B cell (primary cell): ENCODE measurements at regions of chr15 and their contacts with region 1.

Region 1: DNA sequence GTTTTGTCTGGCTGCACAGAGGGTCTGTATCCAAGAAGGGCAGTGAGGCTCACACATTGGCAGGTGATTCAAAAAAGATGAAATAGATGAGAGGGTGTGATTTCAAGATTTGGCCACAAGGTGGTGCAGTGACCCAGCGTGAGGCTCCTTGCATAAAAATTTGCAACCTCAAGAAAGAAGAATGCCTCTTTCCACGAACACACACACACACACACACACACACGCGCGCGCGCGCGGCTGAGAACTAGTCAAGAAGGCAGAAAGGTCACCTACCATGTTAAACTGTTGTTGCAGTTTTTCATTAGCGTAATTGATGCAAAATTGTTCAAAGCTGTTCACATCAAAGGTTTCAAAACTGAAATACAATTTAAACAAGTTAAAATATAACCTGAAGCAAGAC is 39.2 kb downstream of the MYO5C start:
- DNase-seq: peak; percentile 89
- ATAC-seq: peak; percentile 87
- H3K4me3 ChIP-seq: no peak overlapping the region
- H3K4me3 Mint-ChIP-seq: peak overlapping the region; percentile 50
- H3K27ac ChIP-seq: no peak overlapping the region
- H3K27ac Mint-ChIP-seq: peak overlapping the region; percentile 85
- H3K4me1 ChIP-seq: peaks cover 18 to 33% of the 10 kb centered on the region in 2 donors
- H3K4me1 Mint-ChIP-seq: peaks cover 43% of the 10 kb centered on the region
- H3K27me3 ChIP-seq: no peaks in the 10 kb centered on the region
- H3K27me3 Mint-ChIP-seq: no peaks in the 10 kb centered on the region
- CTCF ChIP-seq: peak; percentile 79

Region 2: DNA sequence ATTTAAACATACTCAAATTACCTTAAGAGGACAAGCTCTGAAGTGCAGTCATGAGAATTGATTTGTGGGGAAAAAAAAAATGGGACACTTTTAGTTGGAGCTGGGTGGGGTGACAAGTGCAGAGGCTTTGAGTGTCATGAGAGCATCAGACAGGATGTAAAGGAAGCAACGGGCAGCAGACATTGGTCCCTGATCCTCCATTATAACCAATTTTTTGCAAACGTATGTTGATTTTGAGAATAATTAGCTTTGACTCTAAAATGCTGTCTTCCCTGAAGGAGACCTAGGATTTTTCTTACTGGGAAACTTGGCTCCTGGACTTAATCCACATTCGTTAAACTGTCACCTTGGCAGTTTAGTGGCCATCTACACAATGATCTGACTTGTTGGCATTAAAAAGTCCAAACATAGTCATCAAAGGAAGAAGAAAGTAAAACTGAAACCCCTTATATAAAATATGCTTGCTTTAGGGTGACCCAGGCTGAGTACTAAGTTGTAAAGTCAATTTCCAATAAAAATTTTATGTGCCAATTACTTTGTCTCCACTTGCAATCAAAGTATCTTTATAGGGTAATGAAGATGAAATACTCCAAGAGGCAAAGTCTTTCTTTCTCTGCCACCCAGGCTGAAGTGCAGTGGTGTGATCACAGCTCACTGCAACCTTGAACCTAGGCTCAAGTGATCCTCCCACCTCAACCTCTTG is 189.4 kb before region 1 on chr15:
- CTCF ChIA-PET with region 1: no interaction called
- POLR2A ChIA-PET with region 1: no interaction called
- intact Hi-C with region 1: no loop called
- DNase-seq: no peak
- ATAC-seq: no peak
- H3K4me3 ChIP-seq: no peak overlapping the region
- H3K4me3 Mint-ChIP-seq: no peak overlapping the region
- H3K27ac ChIP-seq: no peak overlapping the region
- H3K27ac Mint-ChIP-seq: no peak overlapping the region
- H3K4me1 ChIP-seq: peaks cover 0 to 6% of the 10 kb centered on the region in 2 donors
- H3K4me1 Mint-ChIP-seq: peaks cover 10% of the 10 kb centered on the region
- H3K27me3 ChIP-seq: no peaks in the 10 kb centered on the region
- H3K27me3 Mint-ChIP-seq: no peaks in the 10 kb centered on the region
- CTCF ChIP-seq: no peak

Region 3: GRCh38 chr15:52154896-52155865 is 101.2 kb before region 1 on chr15:
- CTCF ChIA-PET with region 1: no interaction called
- POLR2A ChIA-PET with region 1: no interaction called
- intact Hi-C with region 1: no loop called
- DNase-seq: no peak
- ATAC-seq: no peak
- H3K4me3 ChIP-seq: no peak overlapping the region
- H3K4me3 Mint-ChIP-seq: no peak overlapping the region
- H3K27ac ChIP-seq: no peak overlapping the region
- H3K27ac Mint-ChIP-seq: no peak overlapping the region
- H3K4me1 ChIP-seq: peaks cover 0 to 11% of the 10 kb centered on the region in 2 donors
- H3K4me1 Mint-ChIP-seq: peaks cover 20% of the 10 kb centered on the region
- H3K27me3 ChIP-seq: no peaks in the 10 kb centered on the region
- H3K27me3 Mint-ChIP-seq: no peaks in the 10 kb centered on the region
- CTCF ChIP-seq: no peak

Region 4: GRCh38 chr15:52179278-52180195 is 76.8 kb before region 1 on chr15:
- CTCF ChIA-PET with region 1: interaction called, 8 read pairs
- POLR2A ChIA-PET with region 1: interaction called, 12 read pairs
- intact Hi-C with region 1: no loop called
- DNase-seq: peak; percentile 95
- ATAC-seq: peak; percentile 78
- H3K4me3 ChIP-seq: peak overlapping the region; percentile 67 to 97 (median 87)
- H3K4me3 Mint-ChIP-seq: peak overlapping the region; percentile 93
- H3K27ac ChIP-seq: peak overlapping the region; percentile 97
- H3K27ac Mint-ChIP-seq: peak overlapping the region; percentile 99
- H3K4me1 ChIP-seq: peaks cover 33 to 48% of the 10 kb centered on the region in 2 donors
- H3K4me1 Mint-ChIP-seq: peaks cover 59% of the 10 kb centered on the region
- H3K27me3 ChIP-seq: no peaks in the 10 kb centered on the region
- H3K27me3 Mint-ChIP-seq: no peaks in the 10 kb centered on the region
- CTCF ChIP-seq: no peak

Region 5: DNA sequence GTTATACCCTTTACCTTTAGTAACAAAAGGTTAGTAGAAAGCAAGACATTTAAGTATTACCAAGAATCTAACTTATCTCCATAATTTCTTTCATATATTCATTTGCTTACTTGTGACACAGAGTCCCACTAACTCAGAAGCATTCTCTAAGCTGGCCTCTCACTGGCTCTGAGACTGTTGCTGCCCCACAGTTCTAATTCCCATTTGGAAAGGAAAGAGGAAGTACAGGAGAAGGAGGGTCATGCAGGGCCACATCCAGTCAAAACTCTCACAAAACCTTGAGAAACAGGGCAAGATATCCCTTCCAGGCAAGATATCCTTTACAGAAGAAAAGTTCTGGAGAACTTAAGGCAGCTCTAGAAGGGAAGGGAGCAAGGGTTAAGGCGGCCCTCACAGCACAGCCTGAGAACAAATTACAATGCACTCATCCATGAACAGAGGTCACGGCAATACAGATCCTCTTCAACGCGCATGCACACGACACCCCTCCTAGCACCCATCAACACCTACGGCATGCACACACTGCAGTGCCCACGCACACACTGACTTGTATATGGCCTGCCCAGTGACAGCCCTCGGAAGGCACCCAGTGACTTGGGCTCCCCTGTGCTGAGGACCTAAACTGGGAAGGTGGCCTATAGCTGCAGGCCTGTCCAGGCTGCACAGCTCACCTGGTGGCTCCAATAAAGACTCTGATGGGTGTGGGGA is 52.2 kb after region 1 on chr15:
- CTCF ChIA-PET with region 1: interaction called, 12 read pairs
- POLR2A ChIA-PET with region 1: no interaction called
- intact Hi-C with region 1: loop called (anchors 1 kb)
- DNase-seq: peak; percentile 35
- ATAC-seq: peak; percentile 76
- H3K4me3 ChIP-seq: peak overlapping the region in 1 of 5 experiments; percentile 34
- H3K4me3 Mint-ChIP-seq: peak overlapping the region; percentile 59
- H3K27ac ChIP-seq: peak overlapping the region; percentile 29 to 52
- H3K27ac Mint-ChIP-seq: peak overlapping the region; percentile 43
- H3K4me1 ChIP-seq: peaks cover 19 to 20% of the 10 kb centered on the region in 2 donors
- H3K4me1 Mint-ChIP-seq: peaks cover 26% of the 10 kb centered on the region
- H3K27me3 ChIP-seq: no peaks in the 10 kb centered on the region
- H3K27me3 Mint-ChIP-seq: no peaks in the 10 kb centered on the region
- CTCF ChIP-seq: no peak

Region 6: GRCh38 chr15:52337198-52337853 is 81.0 kb after region 1 on chr15:
- CTCF ChIA-PET with region 1: interaction called, 44 read pairs
- POLR2A ChIA-PET with region 1: interaction called, 3 read pairs
- intact Hi-C with region 1: loop called (anchors 1 kb)
- DNase-seq: no peak
- ATAC-seq: no peak
- H3K4me3 ChIP-seq: no peak overlapping the region
- H3K4me3 Mint-ChIP-seq: no peak overlapping the region
- H3K27ac ChIP-seq: no peak overlapping the region
- H3K27ac Mint-ChIP-seq: no peak overlapping the region
- H3K4me1 ChIP-seq: no peaks in the 10 kb centered on the region
- H3K4me1 Mint-ChIP-seq: no peaks in the 10 kb centered on the region
- H3K27me3 ChIP-seq: no peaks in the 10 kb centered on the region
- H3K27me3 Mint-ChIP-seq: no peaks in the 10 kb centered on the region
- CTCF ChIP-seq: no peak

Region 7: DNA sequence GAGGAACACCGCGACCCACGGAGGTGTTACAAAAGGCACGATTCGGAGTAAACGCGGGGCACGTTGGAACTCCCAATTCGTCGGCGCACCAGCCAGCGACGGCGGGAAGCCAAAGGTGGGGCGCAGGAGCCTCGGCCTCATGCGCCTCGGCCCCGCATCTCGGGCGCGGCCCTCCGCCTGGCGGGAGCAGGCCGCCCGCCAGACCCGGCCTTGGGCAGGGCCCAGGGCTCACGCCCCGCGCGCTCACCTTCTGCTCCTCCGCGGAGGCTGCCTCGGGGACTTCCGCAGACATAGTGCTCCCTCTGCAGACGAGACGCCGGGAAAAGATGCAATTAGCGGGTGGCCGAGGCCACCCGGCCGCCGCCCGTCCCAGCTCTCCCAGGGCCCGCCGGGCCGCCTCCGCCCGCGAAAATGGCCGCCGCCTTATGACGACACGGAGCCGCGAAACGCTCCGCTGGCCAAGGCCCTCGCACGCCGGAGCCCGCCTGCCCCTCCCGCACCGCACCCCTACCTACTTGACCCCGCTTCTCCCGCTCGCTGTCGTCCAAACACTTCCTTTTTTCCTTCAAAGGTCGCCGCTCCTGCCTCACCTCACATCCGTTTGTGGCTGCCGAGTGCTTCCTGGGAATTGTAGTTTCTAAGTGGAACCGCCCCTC is 312.4 kb after region 1 on chr15 and contains the start of gene ARPP19:
- CTCF ChIA-PET with region 1: interaction called, 4 read pairs
- POLR2A ChIA-PET with region 1: no interaction called
- intact Hi-C with region 1: loop called (anchors 5 kb)
- DNase-seq: peak; percentile 93
- ATAC-seq: peak; percentile 84
- H3K4me3 ChIP-seq: peak within 1 kb of the TSS; percentile 61 to 83 (median 75)
- H3K4me3 Mint-ChIP-seq: peak within 1 kb of the TSS; percentile 98
- H3K27ac ChIP-seq: peak within 1 kb of the TSS; percentile 93 to 99
- H3K27ac Mint-ChIP-seq: peak within 1 kb of the TSS; percentile 98
- H3K4me1 ChIP-seq: peaks cover 33 to 35% of the 10 kb centered on the region in 2 donors
- H3K4me1 Mint-ChIP-seq: peaks cover 42% of the 10 kb centered on the region
- H3K27me3 ChIP-seq: no peaks in the 10 kb centered on the region
- H3K27me3 Mint-ChIP-seq: no peaks in the 10 kb centered on the region
- CTCF ChIP-seq: no peak
- total RNA-seq, gene ARPP19: 147 and 152 TPM in 2 replicates

Region 8: DNA sequence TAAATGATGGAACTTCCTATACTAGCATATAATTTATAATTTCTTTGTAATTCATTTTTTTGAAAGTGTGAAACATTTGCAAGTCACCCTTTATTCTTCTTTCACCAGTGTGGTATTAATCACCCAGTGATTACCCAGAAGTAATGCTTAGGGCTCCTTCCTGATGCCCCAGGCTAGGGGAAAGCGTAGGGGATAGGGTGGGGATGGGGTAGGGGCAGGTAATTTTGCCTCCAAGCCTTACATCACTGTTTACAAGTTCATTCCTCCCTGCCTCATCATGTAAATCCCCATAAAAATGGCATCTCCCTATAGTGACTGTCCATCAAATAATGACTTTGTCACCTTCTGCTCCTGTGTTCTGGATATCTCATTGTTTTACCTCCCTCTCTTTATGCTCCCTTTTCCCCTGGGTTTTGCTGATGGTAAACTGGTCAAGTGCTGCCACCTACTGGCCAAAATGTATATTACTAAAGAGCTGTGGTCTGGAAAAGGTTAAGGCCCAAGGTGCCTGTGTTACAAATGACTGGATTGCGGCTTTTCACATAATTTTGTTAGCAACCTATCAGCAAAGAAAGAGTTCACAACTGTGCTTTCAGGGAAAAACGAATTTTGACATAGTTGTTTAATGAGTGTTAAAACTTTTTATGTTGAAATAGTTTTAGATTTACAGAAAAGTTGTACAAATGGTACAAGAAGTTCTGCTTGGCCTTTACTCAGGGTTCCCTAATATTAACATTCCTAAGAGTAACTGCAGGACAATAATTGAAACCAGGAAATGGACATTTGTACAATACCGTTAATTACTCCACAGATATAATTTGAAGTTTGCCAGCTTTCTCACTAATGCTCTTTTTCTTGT is 479.1 kb after region 1 on chr15:
- CTCF ChIA-PET with region 1: interaction called, 66 read pairs
- POLR2A ChIA-PET with region 1: no interaction called
- intact Hi-C with region 1: loop called (anchors 1 kb)
- DNase-seq: peak; percentile 88
- ATAC-seq: peak; percentile 86
- H3K4me3 ChIP-seq: no peak overlapping the region
- H3K4me3 Mint-ChIP-seq: no peak overlapping the region
- H3K27ac ChIP-seq: no peak overlapping the region
- H3K27ac Mint-ChIP-seq: no peak overlapping the region
- H3K4me1 ChIP-seq: peaks cover 12 to 14% of the 10 kb centered on the region in 2 donors
- H3K4me1 Mint-ChIP-seq: peaks cover 14% of the 10 kb centered on the region
- H3K27me3 ChIP-seq: no peaks in the 10 kb centered on the region
- H3K27me3 Mint-ChIP-seq: peaks cover 4% of the 10 kb centered on the region
- CTCF ChIP-seq: peak; percentile 96